GM12878 (cell line): ENCODE measurements at regions of chr13 and their contacts with region 1.

Region 1: DNA sequence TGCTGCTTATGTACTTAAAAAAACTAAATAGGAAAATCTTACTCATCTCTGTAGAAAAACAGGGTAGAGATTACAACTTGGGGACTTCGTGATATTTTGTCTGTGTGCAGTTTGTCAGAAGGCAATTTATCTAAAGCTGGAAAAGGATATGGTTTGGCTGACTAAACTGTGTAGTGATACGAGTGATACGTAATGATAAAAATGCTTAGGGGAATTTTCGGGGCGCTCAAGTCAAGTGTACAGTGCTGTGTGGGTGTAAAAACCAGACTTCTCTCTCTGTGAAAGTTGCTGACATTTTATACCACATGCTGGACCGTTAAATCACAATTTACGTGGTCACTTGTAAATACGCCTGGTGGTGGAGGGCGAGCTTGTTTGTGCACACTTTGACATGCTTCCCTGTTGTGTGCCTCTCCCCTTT is 221.7 kb downstream of the KCNRG start:
- DNase-seq: peak; percentile 78
- ATAC-seq: peak; percentile 99
- H3K4me3 ChIP-seq: no peak overlapping the region
- H3K27ac ChIP-seq: no peak overlapping the region
- H3K4me1 ChIP-seq: peaks cover 16% of the 10 kb centered on the region
- H3K27me3 ChIP-seq: no peaks in the 10 kb centered on the region
- CTCF ChIP-seq: 0 out of 6 replicates have a peak, but pooled peaks of 1 of the 3 experiments have one; percentile 7
- EP300 ChIP-seq: peak; percentile 89 to 91
- POLR2A ChIP-seq: no peak
- RAD21 ChIP-seq: no peak

Region 2: GRCh38 chr13:50033725-50034124 is 203.2 kb before region 1 on chr13:
- CTCF ChIA-PET with region 1: no interaction called
- POLR2A ChIA-PET with region 1: no interaction called
- RAD21 ChIA-PET with region 1: no interaction called
- SMC1A ChIA-PET with region 1: no interaction called
- in situ Hi-C with region 1: no loop called
- intact Hi-C with region 1: no loop called
- DNase-seq: no peak
- ATAC-seq: no peak
- H3K4me3 ChIP-seq: no peak overlapping the region
- H3K27ac ChIP-seq: no peak overlapping the region
- H3K4me1 ChIP-seq: no peaks in the 10 kb centered on the region
- H3K27me3 ChIP-seq: no peaks in the 10 kb centered on the region
- CTCF ChIP-seq: no peak
- EP300 ChIP-seq: no peak
- POLR2A ChIP-seq: no peak
- RAD21 ChIP-seq: no peak

Region 3: GRCh38 chr13:50130123-50130946 is 106.6 kb before region 1 on chr13:
- CTCF ChIA-PET with region 1: no interaction called
- POLR2A ChIA-PET with region 1: no interaction called
- RAD21 ChIA-PET with region 1: interaction called, 3 read pairs
- SMC1A ChIA-PET with region 1: no interaction called
- in situ Hi-C with region 1: no loop called
- intact Hi-C with region 1: loop called (anchors 2 kb)
- DNase-seq: no peak
- ATAC-seq: peak; percentile 47
- H3K4me3 ChIP-seq: peak overlapping the region; percentile 50; the same call in 1 of the 2 replicates
- H3K27ac ChIP-seq: no peak overlapping the region
- H3K4me1 ChIP-seq: peaks cover 51% of the 10 kb centered on the region
- H3K27me3 ChIP-seq: peaks cover 13 to 31% of the 10 kb centered on the region in 2 experiments
- CTCF ChIP-seq: no peak
- EP300 ChIP-seq: no peak
- POLR2A ChIP-seq: no peak
- RAD21 ChIP-seq: no peak

Region 4: DNA sequence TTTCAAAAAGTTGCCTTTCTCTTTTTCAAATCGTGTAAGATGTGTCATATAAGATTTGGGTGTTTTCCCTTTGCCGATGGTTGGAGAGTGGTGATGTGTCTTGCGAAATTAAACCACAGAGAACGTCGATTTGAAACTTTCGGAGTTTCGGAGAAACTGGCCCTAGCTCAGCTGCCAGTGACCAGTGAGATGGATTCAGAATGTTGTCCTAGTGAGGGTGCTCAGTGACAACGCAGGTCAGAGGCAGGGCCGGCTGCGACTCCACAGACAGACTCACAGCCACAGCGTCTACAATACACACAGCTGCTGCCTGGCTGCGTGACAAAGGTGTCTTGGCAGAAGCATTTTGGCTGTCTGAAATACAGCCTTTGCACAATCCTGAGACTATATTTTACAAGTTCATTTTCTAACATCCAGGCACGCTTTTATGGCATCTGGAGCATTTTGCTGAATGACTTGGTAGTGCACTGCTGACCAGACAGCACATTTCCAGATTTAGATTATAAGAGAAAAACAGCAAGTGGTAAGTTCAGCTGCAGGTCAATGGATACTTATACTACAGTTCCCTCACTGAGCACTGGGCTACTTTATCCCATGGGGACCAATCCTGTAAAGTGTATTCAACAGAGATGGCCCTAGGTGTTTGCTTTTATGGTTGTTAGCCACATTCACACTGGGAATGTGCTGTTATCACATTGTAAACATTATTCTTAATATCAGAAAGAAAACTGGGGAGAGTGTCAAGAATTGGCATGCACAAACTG is 14.2 kb before region 1 on chr13:
- CTCF ChIA-PET with region 1: interaction called, 6 read pairs
- POLR2A ChIA-PET with region 1: no interaction called
- RAD21 ChIA-PET with region 1: interaction called, 4 read pairs
- SMC1A ChIA-PET with region 1: interaction called, 17 read pairs
- in situ Hi-C with region 1: no loop called
- intact Hi-C with region 1: no loop called
- DNase-seq: no peak
- ATAC-seq: no peak; the same call in 2 of the 3 replicates
- H3K4me3 ChIP-seq: no peak overlapping the region
- H3K27ac ChIP-seq: no peak overlapping the region
- H3K4me1 ChIP-seq: peaks cover 18% of the 10 kb centered on the region
- H3K27me3 ChIP-seq: 0 out of 4 replicates have a peak, but pooled peaks cover 1 to 3% of the 10 kb centered on the region in 2 experiments
- CTCF ChIP-seq: no peak
- EP300 ChIP-seq: no peak
- POLR2A ChIP-seq: no peak
- RAD21 ChIP-seq: no peak